Uterus (tissue), 4 donors: ENCODE measurements at regions of chr12 and their contacts with region 1.

Region 1: GRCh38 chr12:4030929-4031702 is 157.9 kb upstream of the PARP11 start:
- DNase-seq: peak; percentile 91 to 93
- H3K4me3 ChIP-seq: peak overlapping the region; percentile 42 to 54
- H3K27ac ChIP-seq: peak overlapping the region; percentile 88 to 98
- H3K4me1 ChIP-seq: peaks cover 0 to 5% of the 10 kb centered on the region in 2 donors
- H3K27me3 ChIP-seq: no peaks in the 10 kb centered on the region
- CTCF ChIP-seq: peak in 2 of 4 experiments; percentile 18 to 36
- POLR2A ChIP-seq: peak; percentile 81 to 89

Region 2: GRCh38 chr12:3885277-3886094 is 145.6 kb before region 1 on chr12:
- intact Hi-C with region 1: loop called (anchors 10 kb)
- DNase-seq: peak; percentile 23 to 33
- H3K4me3 ChIP-seq: peak overlapping the region; percentile 25 to 37
- H3K27ac ChIP-seq: peak overlapping the region; percentile 82 to 88
- H3K4me1 ChIP-seq: no peaks in the 10 kb centered on the region
- H3K27me3 ChIP-seq: no peaks in the 10 kb centered on the region
- CTCF ChIP-seq: peak; percentile 77 to 91 (median 86)
- POLR2A ChIP-seq: no peak

Region 3: DNA sequence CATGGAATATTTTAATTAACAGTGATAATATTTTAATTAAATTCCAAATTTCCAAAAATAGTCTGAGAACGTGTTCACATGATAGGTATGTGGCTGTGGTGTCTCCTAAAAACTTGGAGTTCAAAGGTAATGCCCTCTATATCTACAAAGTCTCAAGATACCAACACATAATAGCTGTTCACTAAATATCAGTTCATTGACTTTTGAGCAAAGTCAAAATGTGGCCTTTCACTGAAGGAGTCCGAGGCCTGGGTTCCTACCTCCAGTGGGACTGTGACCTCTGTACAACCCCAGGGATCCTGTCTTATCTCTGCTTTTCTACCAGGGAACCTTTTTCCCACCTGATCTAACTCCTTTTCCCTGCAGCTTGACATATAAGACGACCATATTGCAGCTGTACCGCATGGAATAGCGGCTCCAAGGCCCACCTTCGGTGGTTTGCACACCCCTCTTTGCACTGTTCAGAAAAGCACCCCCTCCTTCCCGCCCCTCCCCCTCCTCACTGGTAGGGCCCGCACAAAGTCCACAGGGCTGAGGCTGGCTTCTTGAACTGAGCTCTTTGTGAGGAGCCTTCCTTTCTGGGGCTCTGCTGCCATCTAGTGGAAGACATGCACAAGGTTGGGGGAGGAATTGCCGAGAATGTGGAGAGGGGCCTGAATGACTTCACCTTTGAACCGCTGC is 245.5 kb after region 1 on chr12:
- intact Hi-C with region 1: loop called (anchors 10 kb)
- DNase-seq: peak; percentile 89 to 93
- H3K4me3 ChIP-seq: peak overlapping the region; percentile 47 to 91
- H3K27ac ChIP-seq: peak overlapping the region; percentile 88 to 99
- H3K4me1 ChIP-seq: peaks cover 21 to 27% of the 10 kb centered on the region in 2 donors
- H3K27me3 ChIP-seq: no peaks in the 10 kb centered on the region
- CTCF ChIP-seq: peak; percentile 89 to 95 (median 94)
- POLR2A ChIP-seq: peak; percentile 17 to 29